Activated CD4-positive, alpha-beta T cell treated with anti-CD3 and anti-CD28 coated beads, Interleukin-2, amount 10 ng/mL, durations not matched to agents 24 days and 14 days (primary cell): ENCODE measurements at regions of chr9 and their contacts with region 1.

Region 1: DNA sequence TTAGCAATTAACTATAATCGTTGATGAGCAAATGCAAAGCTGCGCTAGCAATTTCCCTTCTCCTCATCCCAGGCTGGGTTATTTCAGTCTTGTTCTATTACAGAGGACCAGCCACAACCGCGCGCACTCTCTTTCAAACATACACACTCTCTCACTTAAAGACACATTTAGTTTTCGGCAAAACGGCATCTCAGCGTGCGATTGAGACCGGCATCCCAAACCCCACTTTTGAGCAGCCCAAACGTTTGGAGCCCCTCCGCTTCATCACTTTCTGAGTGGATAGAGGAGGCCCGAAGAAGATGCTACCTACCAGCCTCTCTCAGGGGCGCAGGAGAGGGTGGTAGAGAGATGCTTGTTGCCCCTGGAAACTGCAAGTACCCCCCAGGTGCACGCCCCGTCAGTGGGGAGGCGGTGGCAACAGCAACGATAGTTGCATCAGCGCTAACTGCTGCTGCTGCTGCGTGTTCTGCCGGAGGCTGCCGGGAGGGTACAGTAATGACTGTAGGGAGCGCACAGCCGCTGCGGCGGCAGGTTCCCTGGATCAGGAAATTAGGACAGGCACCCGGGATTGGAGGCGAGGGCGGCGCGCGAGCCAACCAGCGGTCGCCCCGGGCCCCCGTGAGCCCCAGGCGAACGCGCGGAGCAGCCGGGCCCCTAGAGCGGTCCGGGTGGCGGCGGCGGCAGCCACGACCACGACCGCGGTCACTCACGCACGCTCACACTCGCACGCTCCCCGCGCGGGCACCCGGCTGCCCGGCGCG is 488 bp upstream of the VLDLR start:
- DNase-seq: peak; percentile 85
- H3K4me3 Mint-ChIP-seq: peak overlapping the region; percentile 87
- H3K27ac Mint-ChIP-seq: peak overlapping the region; percentile 84
- H3K4me1 Mint-ChIP-seq: peaks cover 16% of the 10 kb centered on the region
- H3K27me3 Mint-ChIP-seq: peaks cover 43% of the 10 kb centered on the region

Region 2: DNA sequence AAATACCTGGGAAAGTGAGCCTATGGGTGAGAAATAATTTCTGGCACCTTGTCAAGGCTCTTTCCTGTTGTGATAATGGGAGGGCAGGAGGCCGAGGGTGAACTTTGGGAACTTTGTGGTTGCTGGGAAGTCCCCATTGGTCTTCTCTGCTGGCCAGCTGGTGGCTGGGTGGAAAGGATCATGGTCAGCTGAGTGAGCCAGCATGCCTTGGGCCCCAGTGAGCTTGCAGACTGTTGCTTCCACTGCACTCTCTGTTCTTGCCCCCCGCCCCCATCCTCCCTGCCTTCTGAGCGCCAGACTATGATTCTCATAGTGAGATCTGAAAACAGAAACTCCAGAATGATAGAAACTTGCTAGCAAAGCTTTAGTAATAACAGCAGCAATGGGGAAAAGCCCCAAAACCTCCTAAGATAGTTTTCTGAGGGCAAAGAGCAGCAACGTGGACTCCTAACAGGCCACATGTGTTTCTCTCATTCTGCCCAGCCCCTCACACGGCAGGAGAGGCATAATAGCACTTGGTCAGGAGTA is 745.1 kb before region 1 on chr9:
- intact Hi-C with region 1: loop called (anchors 5 kb)
- DNase-seq: peak; percentile 62
- H3K4me3 Mint-ChIP-seq: no peak overlapping the region
- H3K27ac Mint-ChIP-seq: peak overlapping the region; percentile 39
- H3K4me1 Mint-ChIP-seq: peaks cover 12% of the 10 kb centered on the region
- H3K27me3 Mint-ChIP-seq: peaks cover 14% of the 10 kb centered on the region

Region 3: DNA sequence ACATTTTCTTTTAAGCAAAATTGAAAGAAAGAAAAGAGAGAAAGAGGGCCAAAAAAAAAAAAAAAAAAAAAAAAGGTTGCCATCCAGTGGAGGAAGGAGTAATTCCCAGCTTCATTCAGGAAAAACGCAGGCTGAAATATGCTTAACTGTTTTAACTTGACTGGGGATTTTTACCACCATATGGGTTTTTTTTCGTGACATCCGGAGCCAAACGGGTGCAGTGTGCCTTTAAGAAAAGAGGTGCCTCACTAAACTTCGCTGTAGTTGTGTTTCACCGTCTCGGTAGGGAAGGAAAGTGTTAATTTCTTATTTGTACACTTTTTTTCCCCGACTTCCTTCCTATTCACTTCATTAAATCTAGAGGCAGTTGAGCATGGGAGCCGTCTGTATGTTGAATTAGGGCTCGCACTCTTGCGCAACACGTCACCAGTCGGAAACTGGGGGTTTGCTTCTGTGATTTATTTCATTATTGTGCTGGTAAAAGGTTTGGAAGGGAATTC is 462.9 kb before region 1 on chr9:
- intact Hi-C with region 1: loop called (anchors 10 kb)
- DNase-seq: peak; percentile 80
- H3K4me3 Mint-ChIP-seq: peak overlapping the region; percentile 87
- H3K27ac Mint-ChIP-seq: peak overlapping the region; percentile 95
- H3K4me1 Mint-ChIP-seq: peaks cover 32% of the 10 kb centered on the region
- H3K27me3 Mint-ChIP-seq: no peaks in the 10 kb centered on the region

Region 4: DNA sequence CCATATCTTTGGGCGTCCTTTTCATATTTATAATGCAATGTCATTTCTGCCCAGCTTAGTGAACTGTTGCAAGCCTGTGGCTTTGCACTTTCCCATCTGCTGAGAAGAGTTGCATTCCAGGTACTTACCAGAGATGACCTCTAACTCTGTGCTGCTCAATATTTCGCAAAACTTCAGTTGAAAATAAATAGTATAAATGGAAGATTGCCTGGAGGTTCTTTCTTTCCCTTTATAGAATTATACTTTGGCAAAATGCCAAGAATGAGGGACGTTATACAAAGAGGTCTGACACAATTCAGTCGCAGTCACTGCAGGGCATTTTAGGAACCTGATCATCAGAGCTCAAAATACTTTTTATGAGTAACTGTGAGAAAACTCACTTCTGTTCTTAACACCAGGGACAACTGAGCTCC is 18.4 kb before region 1 on chr9:
- intact Hi-C with region 1: no loop called
- DNase-seq: no peak
- H3K4me3 Mint-ChIP-seq: no peak overlapping the region
- H3K27ac Mint-ChIP-seq: no peak overlapping the region
- H3K4me1 Mint-ChIP-seq: no peaks in the 10 kb centered on the region
- H3K27me3 Mint-ChIP-seq: peaks cover 29% of the 10 kb centered on the region

Region 5: GRCh38 chr9:2638871-2639673 is 18.0 kb after region 1 on chr9:
- intact Hi-C with region 1: loop called (anchors 2 kb)
- DNase-seq: no peak
- H3K4me3 Mint-ChIP-seq: no peak overlapping the region
- H3K27ac Mint-ChIP-seq: peak overlapping the region; percentile 79
- H3K4me1 Mint-ChIP-seq: peaks cover 12% of the 10 kb centered on the region
- H3K27me3 Mint-ChIP-seq: no peaks in the 10 kb centered on the region

Region 6: GRCh38 chr9:2655411-2655901 is 34.4 kb after region 1 on chr9:
- intact Hi-C with region 1: loop called (anchors 2 kb)
- DNase-seq: peak; percentile 83
- H3K4me3 Mint-ChIP-seq: peak overlapping the region; percentile 53
- H3K27ac Mint-ChIP-seq: peak overlapping the region; percentile 94
- H3K4me1 Mint-ChIP-seq: peaks cover 20% of the 10 kb centered on the region
- H3K27me3 Mint-ChIP-seq: no peaks in the 10 kb centered on the region

Region 7: DNA sequence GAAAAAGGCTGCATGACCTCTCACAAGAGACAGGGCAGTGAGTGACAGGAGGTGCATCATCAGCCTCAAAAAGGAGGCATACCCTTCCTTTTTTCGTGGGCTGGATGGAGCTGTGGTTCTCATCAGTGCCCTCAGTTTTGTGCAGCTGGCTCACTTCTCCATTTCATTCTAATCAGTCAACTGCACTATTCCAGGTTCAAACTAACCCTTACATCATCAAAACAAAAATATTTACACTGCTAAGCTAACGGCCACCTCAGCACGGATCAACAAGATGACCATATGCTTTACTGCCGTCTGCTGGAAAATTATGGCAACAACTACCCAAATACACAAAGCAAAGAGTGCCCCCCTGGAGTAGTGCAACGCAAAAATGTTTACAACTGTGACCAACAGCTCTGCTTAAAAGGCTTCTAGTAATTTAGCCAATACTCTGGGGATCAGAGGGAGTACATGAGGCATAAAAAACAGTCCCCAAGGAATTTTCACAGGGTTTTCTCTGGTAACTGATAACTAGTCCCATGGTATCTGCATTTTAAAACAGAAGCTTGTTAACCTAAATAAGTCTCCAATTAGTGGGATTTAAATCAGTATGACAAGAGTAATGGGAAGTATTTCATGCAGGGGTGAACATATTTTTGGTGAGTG is 107.0 kb after region 1 on chr9:
- intact Hi-C with region 1: loop called (anchors 5 kb)
- DNase-seq: peak; percentile 68
- H3K4me3 Mint-ChIP-seq: no peak overlapping the region
- H3K27ac Mint-ChIP-seq: no peak overlapping the region
- H3K4me1 Mint-ChIP-seq: peaks cover 4% of the 10 kb centered on the region
- H3K27me3 Mint-ChIP-seq: no peaks in the 10 kb centered on the region

Region 8: DNA sequence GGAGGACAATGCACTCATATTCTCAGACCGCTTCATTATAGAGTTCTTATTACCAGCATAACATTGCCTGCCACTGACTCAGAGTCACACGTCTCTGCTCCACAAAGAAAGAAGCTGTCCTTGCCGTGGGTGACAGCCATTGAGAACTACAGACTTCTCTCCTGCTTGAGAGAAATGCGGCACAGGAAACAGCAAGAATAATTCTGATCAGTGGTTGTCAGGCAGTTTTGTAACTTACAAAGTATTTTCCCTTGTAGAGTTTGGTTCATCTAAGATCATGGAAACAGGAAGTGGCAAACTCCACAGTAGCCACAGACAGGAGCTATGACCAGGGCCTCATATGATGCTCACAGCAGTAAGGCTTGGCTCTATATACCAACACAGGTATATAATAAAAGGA is 143.3 kb after region 1 on chr9:
- intact Hi-C with region 1: loop called (anchors 1 kb)
- DNase-seq: peak; percentile 85
- H3K4me3 Mint-ChIP-seq: peak overlapping the region; percentile 57
- H3K27ac Mint-ChIP-seq: peak overlapping the region; percentile 91
- H3K4me1 Mint-ChIP-seq: peaks cover 36% of the 10 kb centered on the region
- H3K27me3 Mint-ChIP-seq: no peaks in the 10 kb centered on the region